AG04450 (cell line): ENCODE measurements at regions of chr3 and their contacts with region 1.

Region 1: DNA sequence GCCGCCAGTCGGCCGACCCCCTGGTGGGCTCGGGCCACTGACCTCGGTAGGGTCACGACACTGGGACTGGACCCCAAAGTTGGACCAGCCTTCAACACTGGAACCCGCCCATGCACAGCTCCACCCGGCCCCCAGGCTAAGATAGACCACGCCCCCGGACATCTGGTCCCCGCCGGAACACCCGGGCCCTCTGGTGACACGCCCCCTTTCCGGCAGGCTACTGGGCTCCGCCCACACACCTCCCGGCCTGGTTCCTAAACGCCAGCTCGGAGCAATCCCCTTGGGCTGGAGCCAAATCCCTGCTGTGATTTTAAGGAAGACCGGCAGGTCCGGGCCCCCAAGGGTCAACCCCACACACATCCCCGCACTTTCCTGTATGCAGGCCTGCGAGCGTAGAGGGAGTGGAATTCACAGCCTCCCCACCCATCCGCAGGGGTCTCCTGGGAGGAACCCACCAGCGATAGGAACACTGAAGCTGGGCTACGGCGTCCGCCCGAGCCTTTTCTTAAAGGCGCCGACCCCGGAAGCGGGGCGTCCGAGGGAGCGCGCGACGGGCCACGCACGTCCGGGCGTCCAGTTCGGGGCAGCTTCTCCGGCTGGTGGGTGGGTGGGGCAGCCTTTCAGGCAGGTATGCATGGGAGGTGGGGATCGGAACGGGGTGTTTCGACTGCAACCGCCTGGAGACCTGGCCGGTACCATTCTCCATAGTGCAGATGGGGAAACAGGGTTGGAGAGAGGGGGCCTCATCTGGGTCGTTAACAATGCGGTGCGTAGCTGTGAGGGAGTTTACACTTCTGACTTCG is at the start of gene HEMK1:
- DNase-seq: peak; percentile 83
- H3K4me3 ChIP-seq: peak within 1 kb of the TSS; percentile 99
- H3K27ac ChIP-seq: peak within 1 kb of the TSS; percentile 81
- H3K27me3 ChIP-seq: no peaks in the 10 kb centered on the region
- CTCF ChIP-seq: no peak
- polyA plus RNA-seq, gene HEMK1: 12.1 and 15.5 TPM in 2 replicates

Region 2: DNA sequence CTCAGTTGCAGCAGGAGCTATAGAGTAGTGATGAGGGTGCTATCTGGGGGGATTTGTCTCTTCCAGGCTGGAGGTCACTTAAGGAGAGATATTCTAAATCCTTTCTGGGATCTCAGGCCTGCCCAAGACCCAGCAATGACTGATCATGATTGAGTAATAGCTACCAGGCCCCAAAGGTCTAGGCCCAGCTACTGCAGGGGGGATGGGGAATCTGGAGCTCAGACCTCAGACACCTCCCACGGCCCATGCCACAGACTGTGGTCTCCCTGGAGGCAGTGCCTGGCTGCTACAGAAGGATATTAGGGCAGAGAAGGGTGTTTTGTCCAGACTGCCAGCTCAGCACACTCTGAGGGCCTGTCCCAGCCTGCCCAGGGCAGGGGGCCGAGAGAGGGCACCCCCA is 357.2 kb before region 1 on chr3:
- CTCF ChIA-PET with region 1: no interaction called
- POLR2A ChIA-PET with region 1: no interaction called
- DNase-seq: no peak
- H3K4me3 ChIP-seq: no peak overlapping the region
- H3K27ac ChIP-seq: no peak overlapping the region
- H3K27me3 ChIP-seq: peaks cover 16% of the 10 kb centered on the region
- CTCF ChIP-seq: no peak

Region 3: GRCh38 chr3:50550079-50550741 is 18.9 kb before region 1 on chr3:
- CTCF ChIA-PET with region 1: interaction called, 17 read pairs
- POLR2A ChIA-PET with region 1: no interaction called
- DNase-seq: no peak
- H3K4me3 ChIP-seq: no peak overlapping the region
- H3K27ac ChIP-seq: no peak overlapping the region
- H3K27me3 ChIP-seq: peaks cover 14% of the 10 kb centered on the region
- CTCF ChIP-seq: peak; percentile 73

Region 4: GRCh38 chr3:50557915-50558314 is 11.2 kb before region 1 on chr3:
- CTCF ChIA-PET with region 1: interaction called, 3 read pairs
- POLR2A ChIA-PET with region 1: interaction called, 12 read pairs
- DNase-seq: no peak
- H3K4me3 ChIP-seq: no peak overlapping the region
- H3K27ac ChIP-seq: no peak overlapping the region
- H3K27me3 ChIP-seq: peaks cover 11% of the 10 kb centered on the region
- CTCF ChIP-seq: no peak

Region 5: DNA sequence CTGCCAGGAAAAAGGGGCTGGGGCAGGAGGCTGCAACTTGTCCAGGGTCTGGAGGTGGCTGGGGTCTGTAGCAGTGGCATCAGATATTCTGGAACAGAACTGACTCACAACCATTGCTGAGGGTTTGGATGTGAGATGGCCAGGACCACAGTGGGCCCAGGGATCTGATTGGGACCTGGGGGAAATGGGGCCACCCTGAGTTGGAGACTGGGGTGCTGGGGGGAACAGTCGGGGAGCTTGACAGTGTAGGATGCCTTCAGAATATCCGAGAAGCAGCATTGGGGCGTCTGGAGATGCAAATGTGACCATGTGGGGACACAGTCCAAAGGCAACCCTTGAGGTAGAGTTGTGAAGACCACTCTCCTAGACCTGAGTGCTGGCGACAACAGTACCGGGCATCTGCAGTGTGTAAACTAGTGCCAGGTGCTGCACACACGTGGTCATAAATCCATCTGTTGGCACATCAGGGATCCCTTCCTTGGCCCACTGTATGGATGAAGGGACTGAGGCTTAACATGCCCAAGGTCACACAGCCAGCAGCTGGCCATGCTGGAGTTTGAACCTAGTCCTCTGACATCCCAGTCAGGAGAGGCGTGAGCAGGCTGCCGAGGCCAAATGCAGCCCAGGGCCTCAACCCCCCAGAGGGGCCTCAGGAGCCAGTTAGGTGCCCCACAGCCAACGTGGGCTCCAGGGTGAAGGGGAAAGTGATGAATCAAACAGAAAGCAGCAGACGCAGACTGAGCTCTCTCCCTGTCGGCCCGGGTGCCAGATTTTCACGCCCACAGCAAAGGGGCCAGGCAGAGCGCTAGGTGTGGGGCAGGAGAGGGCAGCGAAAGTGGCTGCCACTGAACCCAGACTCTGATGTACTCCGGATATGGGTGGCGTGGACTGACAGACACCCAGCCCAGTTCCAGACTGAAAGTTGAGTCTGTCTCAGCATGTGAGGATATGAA is 18.9 kb after region 1 on chr3:
- CTCF ChIA-PET with region 1: interaction called, 13 read pairs
- POLR2A ChIA-PET with region 1: no interaction called
- DNase-seq: no peak
- H3K4me3 ChIP-seq: no peak overlapping the region
- H3K27ac ChIP-seq: no peak overlapping the region
- H3K27me3 ChIP-seq: no peaks in the 10 kb centered on the region
- CTCF ChIP-seq: no peak

Region 6: DNA sequence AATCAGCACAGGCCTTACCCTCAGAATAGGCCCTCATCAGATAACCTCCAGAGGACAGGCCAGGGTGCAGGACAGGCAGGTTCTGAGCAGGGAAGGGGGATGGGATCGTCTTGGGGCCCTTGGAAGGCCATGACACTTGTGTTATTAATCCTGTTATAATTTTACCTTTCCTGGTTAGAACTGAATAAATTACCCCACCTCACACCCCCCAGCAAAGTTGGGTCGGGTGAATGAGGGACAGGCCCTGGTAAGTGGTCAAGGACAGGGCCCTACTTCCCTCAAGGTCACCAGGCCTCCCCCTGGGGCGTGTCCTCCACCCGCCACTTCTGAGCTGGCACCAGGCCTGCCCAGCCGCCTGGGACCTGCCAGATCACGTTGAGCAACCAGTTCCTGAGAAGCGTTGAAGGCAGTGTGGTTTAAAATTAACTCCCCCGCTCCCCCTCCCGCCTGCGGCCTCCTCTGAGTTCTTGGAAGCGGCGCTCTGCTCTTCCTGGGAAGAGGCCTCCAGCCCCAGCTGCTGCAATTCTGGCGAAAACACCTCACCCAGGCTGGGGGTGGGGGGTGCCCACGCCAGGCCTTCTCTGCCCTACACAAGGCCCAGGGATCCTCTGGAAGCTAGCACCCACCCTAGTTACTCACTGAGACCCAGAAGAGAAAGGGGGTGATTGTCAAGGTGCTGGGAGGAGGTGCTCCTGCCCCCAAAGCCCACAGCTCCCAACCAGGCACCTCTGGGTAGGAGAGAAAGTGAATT is 31.9 kb after region 1 on chr3:
- CTCF ChIA-PET with region 1: interaction called, 24 read pairs
- POLR2A ChIA-PET with region 1: interaction called, 38 read pairs
- DNase-seq: peak; percentile 89
- H3K4me3 ChIP-seq: peak overlapping the region; percentile 34
- H3K27ac ChIP-seq: peak overlapping the region; percentile 100
- H3K27me3 ChIP-seq: no peaks in the 10 kb centered on the region
- CTCF ChIP-seq: no peak